Activated naive CD8-positive, alpha-beta T cell treated with anti-CD3 and anti-CD28 coated beads, Interleukin-2, amount 10 ng/mL, durations not matched to agents 7 days and 5 days (primary cell): ENCODE measurements at regions of chr1 and their contacts with region 1.

Region 1: GRCh38 chr1:8925406-8925805 is 20.3 kb upstream of the CA6 start:
- DNase-seq: no peak
- ATAC-seq: no peak
- H3K4me3 Mint-ChIP-seq: no peak overlapping the region
- H3K27ac Mint-ChIP-seq: no peak overlapping the region
- H3K4me1 Mint-ChIP-seq: peaks cover 28% of the 10 kb centered on the region
- H3K27me3 Mint-ChIP-seq: no peaks in the 10 kb centered on the region

Region 2: DNA sequence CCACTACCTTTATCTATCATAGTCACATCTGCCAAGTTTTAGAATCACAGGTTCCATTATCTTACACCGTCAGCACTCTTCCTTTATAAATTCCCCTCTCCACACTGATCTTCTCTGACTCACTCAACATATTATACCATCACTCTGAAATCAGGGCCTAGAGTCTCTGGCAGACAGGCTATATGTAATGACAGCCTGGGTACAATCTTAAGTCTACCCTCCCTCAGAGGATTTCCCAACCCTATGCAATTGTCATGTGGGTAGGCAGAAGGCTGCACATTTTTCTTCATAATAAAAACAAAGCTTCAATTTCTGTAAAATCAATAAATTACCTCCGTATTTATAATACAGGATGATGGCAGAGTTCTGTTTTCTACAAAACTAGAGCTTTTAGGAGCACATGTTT is 246.0 kb before region 1 on chr1:
- POLR2A ChIA-PET with region 1: no interaction called
- DNase-seq: no peak
- ATAC-seq: peak; percentile 26
- H3K4me3 Mint-ChIP-seq: no peak overlapping the region
- H3K27ac Mint-ChIP-seq: no peak overlapping the region
- H3K4me1 Mint-ChIP-seq: peaks cover 12% of the 10 kb centered on the region
- H3K27me3 Mint-ChIP-seq: no peaks in the 10 kb centered on the region

Region 3: DNA sequence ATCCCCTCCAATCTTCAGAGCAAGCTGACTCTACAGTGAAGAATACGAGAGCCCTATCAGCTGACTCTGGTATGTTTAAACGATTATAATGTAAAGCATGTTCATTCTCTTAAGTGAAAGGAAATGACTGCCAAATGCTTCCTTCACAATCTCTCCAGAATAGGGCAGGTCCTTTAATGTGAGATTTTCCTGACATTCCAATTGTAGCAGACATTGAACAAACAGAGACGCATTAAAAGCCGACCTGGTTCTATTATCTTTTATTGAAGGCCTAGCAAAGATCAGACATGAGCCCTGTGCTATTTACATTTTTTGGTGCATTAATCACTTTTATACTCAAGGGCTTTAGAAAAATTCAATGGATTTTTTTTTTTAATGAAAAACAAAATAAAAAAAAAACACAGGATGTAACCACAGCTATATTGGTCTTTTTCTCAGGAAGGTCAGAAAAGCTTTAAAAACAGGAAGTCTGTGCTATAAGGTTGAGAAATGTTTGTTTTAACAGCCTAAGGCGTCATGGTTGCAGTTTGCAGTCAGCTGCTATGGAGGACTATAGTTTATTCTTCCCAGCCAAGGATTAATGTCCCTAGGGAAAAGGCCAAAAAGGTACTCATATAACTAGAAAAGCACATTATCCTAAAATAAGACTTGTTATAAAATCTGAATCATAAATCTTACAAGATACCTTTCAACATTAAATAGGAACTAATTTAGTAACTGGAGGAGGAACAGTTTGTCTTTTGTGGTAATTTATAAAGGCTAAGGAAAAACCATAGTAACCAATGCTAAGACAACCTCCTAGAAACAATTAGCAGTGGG is 212.8 kb before region 1 on chr1:
- POLR2A ChIA-PET with region 1: no interaction called
- DNase-seq: no peak
- ATAC-seq: peak; percentile 52
- H3K4me3 Mint-ChIP-seq: peak overlapping the region; percentile 23
- H3K27ac Mint-ChIP-seq: peak overlapping the region; percentile 52
- H3K4me1 Mint-ChIP-seq: peaks cover 14% of the 10 kb centered on the region
- H3K27me3 Mint-ChIP-seq: no peaks in the 10 kb centered on the region

Region 4: DNA sequence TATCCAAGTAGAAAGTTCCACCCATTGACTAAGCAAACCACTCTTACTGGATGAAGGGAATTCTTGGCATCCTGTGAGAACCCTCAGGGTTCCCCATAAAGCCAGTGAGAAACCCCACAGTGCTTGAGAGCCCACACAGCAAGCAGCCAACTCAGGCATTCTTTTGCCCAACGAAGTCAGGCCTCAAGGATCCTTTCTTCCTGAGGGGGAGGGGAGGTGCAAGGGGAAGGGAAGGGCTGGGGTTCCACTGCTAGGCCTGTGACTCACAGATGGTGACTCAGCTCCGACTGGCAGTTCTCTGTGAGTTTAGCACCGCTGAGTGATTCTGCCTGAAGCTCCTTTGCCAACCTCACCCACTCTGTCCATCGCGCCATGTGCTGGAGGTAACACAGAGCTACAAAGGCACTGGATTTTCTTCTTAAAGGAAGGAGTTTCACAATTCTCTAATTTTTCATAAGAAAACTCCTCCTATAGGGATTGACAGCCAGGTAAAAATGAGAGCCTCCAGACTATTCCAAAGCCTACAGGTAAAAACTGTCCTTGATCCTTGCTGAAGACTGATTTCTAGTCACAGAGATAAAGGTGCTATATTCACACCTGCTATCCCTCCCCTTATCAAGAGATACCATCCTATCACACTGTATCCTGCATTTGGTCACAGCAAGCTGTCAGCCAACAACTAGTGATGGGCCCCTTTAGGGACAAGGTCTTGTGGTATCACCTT is 51.7 kb before region 1 on chr1:
- POLR2A ChIA-PET with region 1: interaction called, 193 read pairs
- DNase-seq: peak; percentile 54
- ATAC-seq: peak; percentile 28
- H3K4me3 Mint-ChIP-seq: peak overlapping the region; percentile 96
- H3K27ac Mint-ChIP-seq: peak overlapping the region; percentile 90
- H3K4me1 Mint-ChIP-seq: peaks cover 51% of the 10 kb centered on the region
- H3K27me3 Mint-ChIP-seq: no peaks in the 10 kb centered on the region

Region 5: DNA sequence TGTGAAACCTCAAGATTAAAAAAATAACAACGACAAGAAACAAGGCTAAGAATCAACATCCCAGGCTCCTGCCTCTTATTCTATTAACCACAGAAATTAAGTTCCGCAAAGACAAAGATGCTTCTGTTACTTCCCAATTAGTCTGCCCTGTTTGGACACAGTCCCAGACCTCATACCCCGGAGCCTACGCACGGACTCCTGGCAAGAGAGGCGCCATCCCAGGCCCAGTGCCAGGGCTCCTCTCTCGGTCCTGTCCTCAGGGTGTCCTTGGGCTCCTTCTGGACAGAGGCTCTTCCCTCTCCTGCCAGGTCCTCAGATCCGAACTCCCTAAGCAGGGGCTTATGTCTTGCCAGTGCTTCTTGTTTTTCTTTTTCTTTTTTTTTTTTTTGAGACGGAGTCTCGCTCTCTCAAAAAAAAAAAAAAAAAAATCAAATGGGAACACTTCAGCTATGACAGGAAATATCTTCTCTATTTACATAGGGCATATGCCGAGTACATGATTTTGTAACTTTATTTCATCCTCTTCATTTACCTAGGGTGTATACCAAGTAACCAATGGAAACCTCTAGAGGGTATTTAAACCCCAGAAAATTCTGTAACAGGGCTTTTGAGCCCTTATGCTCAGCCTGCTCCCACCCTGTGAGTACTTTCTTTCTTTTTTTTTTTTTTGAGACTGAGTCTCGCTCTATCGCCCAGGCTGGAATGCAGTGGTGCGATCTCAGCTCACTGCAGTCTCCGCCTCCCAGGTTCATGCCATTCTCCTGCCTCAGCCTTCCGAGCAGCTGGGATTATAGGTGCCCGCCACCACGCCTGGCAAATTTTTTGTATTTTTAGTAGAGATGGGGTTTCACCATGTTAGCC is 35.3 kb before region 1 on chr1:
- POLR2A ChIA-PET with region 1: no interaction called
- DNase-seq: no peak
- ATAC-seq: no peak
- H3K4me3 Mint-ChIP-seq: no peak overlapping the region
- H3K27ac Mint-ChIP-seq: no peak overlapping the region
- H3K4me1 Mint-ChIP-seq: peaks cover 5% of the 10 kb centered on the region
- H3K27me3 Mint-ChIP-seq: no peaks in the 10 kb centered on the region

Region 6: GRCh38 chr1:8947127-8947691 is 21.8 kb after region 1 on chr1:
- POLR2A ChIA-PET with region 1: interaction called, 754 read pairs
- DNase-seq: no peak
- ATAC-seq: peak; percentile 3
- H3K4me3 Mint-ChIP-seq: peak overlapping the region; percentile 83
- H3K27ac Mint-ChIP-seq: peak overlapping the region; percentile 93
- H3K4me1 Mint-ChIP-seq: peaks cover 78% of the 10 kb centered on the region
- H3K27me3 Mint-ChIP-seq: no peaks in the 10 kb centered on the region

Region 7: GRCh38 chr1:8980656-8981055 is 55.2 kb after region 1 on chr1:
- POLR2A ChIA-PET with region 1: interaction called, 169 read pairs
- DNase-seq: no peak
- ATAC-seq: no peak
- H3K4me3 Mint-ChIP-seq: no peak overlapping the region
- H3K27ac Mint-ChIP-seq: no peak overlapping the region
- H3K4me1 Mint-ChIP-seq: peaks cover 23% of the 10 kb centered on the region
- H3K27me3 Mint-ChIP-seq: no peaks in the 10 kb centered on the region

Region 8: GRCh38 chr1:9004700-9005394 is 79.4 kb after region 1 on chr1:
- POLR2A ChIA-PET with region 1: interaction called, 15 read pairs
- DNase-seq: peak; percentile 94
- ATAC-seq: peak; percentile 76
- H3K4me3 Mint-ChIP-seq: peak overlapping the region; percentile 77
- H3K27ac Mint-ChIP-seq: peak overlapping the region; percentile 81
- H3K4me1 Mint-ChIP-seq: peaks cover 17% of the 10 kb centered on the region
- H3K27me3 Mint-ChIP-seq: peaks cover 3% of the 10 kb centered on the region

Region 9: GRCh38 chr1:9455487-9456234 is 530.3 kb after region 1 on chr1:
- POLR2A ChIA-PET with region 1: no interaction called
- DNase-seq: peak; percentile 71
- ATAC-seq: peak; percentile 45
- H3K4me3 Mint-ChIP-seq: no peak overlapping the region
- H3K27ac Mint-ChIP-seq: no peak overlapping the region
- H3K4me1 Mint-ChIP-seq: no peaks in the 10 kb centered on the region
- H3K27me3 Mint-ChIP-seq: peaks cover 19% of the 10 kb centered on the region